Activated T-helper 2 cell treated with anti-CD3 and anti-CD28 coated beads, Interferon-gamma antibody, Interleukin-2, Interleukin-4, amounts not matched to agents 10 μg/mL and 5 μg/mL and 100 μg/mL, durations not matched to agents 14 hours and 24 hours and 36 hours (primary cell): ENCODE measurements at regions of chr1 and their contacts with region 1.

Region 1: DNA sequence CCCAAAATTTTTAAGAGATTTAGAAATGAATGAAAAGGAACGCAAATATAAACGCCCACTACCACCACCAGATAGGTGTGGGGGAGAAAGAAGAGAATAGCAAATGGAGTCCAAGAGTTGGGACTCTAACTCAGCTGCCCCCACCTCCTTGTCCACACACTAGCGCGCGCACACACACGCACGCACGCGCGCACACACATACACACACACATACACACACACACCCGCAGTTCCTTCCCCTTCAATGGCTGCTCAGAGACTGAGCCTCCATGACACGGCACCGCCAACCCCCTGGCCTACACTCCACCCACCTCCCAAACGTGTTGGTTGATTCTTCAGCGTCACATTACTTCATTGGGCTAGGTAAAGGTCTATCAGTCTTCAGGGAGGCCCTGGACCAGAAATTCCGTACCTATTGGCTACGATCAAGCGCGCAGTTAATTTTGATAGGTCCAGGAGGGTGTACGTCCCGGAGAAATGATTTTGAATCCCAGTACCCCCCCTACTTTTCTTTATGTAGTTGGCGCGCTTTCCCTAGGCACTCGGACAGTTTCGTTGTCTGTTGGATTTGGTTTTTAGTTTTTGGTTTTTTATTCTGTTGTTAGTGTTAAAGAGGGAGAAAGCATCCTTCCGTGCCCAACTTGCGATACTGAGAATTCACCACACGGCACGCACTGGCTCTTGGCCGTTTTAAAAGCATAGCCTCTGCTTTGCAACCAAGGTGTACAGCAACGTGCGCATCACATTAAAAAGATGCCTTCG is at the start of gene ANP32E:
- DNase-seq: peak; percentile 95
- H3K4me3 Mint-ChIP-seq: no peak within 1 kb of the TSS
- H3K27ac Mint-ChIP-seq: peak within 1 kb of the TSS; percentile 97
- H3K4me1 Mint-ChIP-seq: peaks cover 18% of the 10 kb centered on the region
- H3K27me3 Mint-ChIP-seq: peaks cover 1% of the 10 kb centered on the region
- total RNA-seq, gene ANP32E: 195 and 198 TPM in 2 replicates

Region 2: DNA sequence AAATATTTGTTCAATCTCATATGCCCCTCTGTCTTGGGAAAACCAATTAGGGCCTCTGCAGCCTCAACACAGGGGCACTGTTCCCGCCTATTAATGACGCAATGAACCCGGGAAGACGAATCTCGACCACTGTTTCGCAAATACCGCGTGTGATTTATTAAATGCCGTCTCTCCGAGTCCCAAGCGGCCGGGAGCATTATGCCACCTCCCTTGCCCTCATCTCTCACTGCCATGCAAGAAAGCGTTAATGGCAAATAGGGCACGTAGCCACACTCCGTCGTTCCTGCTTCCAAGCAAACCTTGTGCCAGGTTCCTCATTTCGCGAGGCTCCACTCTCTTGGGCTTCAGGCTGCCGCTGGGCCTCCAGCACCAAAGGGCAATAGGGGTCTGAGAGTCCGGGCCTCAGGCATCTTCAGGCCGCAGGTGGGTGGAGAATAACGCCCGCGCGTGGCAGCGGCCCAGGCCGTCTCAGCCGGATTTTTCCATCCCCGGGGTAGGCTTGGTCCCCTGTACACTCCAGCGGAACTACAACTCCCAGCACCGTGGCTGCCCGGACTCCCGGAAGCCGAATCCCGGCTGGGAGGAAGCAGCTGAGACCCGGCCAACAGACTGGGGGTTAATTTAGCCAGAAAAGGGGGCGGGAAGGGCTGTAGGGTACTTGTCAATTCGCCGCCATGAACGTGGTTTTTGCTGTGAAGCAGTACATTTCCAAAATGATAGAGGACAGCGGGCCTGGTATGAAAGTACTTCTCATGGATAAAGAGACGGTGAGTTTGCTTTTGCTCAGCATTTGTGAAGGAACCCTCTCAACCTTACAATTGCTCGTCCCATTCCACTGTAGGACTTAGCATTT is 168.6 kb before region 1 on chr1 and contains the start of gene VPS45:
- intact Hi-C with region 1: loop called (anchors 2 kb)
- DNase-seq: peak; percentile 80
- H3K4me3 Mint-ChIP-seq: peak within 1 kb of the TSS; percentile 94
- H3K27ac Mint-ChIP-seq: peak within 1 kb of the TSS; percentile 97
- H3K4me1 Mint-ChIP-seq: peaks cover 31% of the 10 kb centered on the region
- H3K27me3 Mint-ChIP-seq: peaks cover 1% of the 10 kb centered on the region
- total RNA-seq, gene VPS45: 21.9 TPM in 2 replicates

Region 3: GRCh38 chr1:150268705-150269403 is 32.8 kb after region 1 on chr1 and contains the start of gene APH1A:
- intact Hi-C with region 1: loop called (anchors 2 kb)
- DNase-seq: peak; percentile 92
- H3K4me3 Mint-ChIP-seq: peak within 1 kb of the TSS; percentile 91
- H3K27ac Mint-ChIP-seq: peak within 1 kb of the TSS; percentile 80
- H3K4me1 Mint-ChIP-seq: peaks cover 17% of the 10 kb centered on the region
- H3K27me3 Mint-ChIP-seq: no peaks in the 10 kb centered on the region
- total RNA-seq, gene APH1A: 103 and 105 TPM in 2 replicates

Region 4: GRCh38 chr1:150321826-150322166 is 85.8 kb after region 1 on chr1:
- intact Hi-C with region 1: loop called (anchors 1 kb)
- DNase-seq: no peak
- H3K4me3 Mint-ChIP-seq: peak overlapping the region; percentile 100
- H3K27ac Mint-ChIP-seq: peak overlapping the region; percentile 99
- H3K4me1 Mint-ChIP-seq: peaks cover 18% of the 10 kb centered on the region
- H3K27me3 Mint-ChIP-seq: no peaks in the 10 kb centered on the region

Region 5: GRCh38 chr1:150552093-150552691 is 316.2 kb after region 1 on chr1:
- intact Hi-C with region 1: no loop called
- DNase-seq: no peak
- H3K4me3 Mint-ChIP-seq: no peak overlapping the region
- H3K27ac Mint-ChIP-seq: no peak overlapping the region
- H3K4me1 Mint-ChIP-seq: peaks cover 29% of the 10 kb centered on the region
- H3K27me3 Mint-ChIP-seq: peaks cover 13% of the 10 kb centered on the region

Region 6: DNA sequence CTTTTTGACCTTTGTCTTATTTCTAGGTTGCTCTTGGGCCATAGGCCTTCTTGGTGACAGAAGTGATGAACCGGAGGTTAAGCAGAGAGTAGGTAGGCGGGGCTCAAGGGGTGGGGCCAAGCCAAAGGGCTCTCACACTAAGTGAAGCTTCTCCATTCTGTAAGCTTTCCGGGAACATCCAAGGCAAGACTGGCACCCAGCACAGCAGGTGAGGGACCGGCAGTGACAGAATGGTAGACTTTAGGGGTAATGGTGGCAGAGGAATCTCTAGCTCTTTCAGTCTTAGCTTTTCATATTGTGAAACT is 920.4 kb after region 1 on chr1 and contains the start of gene TNFAIP8L2:
- intact Hi-C with region 1: loop called (anchors 10 kb)
- DNase-seq: peak; percentile 71
- H3K4me3 Mint-ChIP-seq: peak within 1 kb of the TSS; percentile 99
- H3K27ac Mint-ChIP-seq: peak within 1 kb of the TSS; percentile 99
- H3K4me1 Mint-ChIP-seq: peaks cover 37% of the 10 kb centered on the region
- H3K27me3 Mint-ChIP-seq: no peaks in the 10 kb centered on the region
- total RNA-seq, gene TNFAIP8L2: 24.3 and 28.7 TPM in 2 replicates

Region 7: DNA sequence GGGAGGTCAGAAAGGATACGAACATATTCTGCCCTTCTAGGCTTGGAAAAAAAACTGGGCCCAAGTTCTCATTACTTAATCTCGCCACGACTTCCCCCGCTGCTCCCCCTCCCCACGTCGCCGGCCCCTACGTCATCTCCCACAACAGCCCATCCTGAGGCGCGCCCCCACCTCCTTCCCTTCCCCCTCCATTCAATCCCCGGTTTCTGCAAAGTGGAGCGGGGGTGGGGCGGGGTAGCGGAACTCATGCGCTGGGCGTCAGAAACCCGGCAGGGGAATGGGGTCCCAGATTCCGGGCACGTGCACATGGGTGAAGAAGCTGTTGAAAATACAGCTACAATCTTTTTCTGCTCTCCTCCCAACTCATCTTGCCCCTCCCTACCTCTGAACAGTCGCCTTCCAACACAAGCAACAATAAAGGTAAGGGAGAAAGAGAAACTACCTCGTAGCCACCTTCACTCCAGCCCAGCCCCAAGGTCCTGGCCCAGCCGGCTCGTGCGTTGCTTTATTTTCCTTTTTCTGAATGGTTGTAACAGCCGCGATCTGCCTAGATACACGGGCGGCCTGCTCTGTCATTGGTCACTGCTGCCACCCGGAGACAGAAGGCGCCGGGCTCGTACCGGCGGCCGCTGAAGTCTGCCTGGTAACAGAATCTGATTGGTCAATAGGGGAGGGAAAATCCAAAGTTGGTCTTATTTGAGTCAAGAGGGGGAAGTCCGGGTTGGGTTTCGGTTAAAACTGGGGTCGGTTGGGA is 1110.9 kb after region 1 on chr1 and contains the start of gene RFX5:
- intact Hi-C with region 1: no loop called
- DNase-seq: peak; percentile 95
- H3K4me3 Mint-ChIP-seq: peak within 1 kb of the TSS; percentile 94
- H3K27ac Mint-ChIP-seq: peak within 1 kb of the TSS; percentile 99
- H3K4me1 Mint-ChIP-seq: peaks cover 29% of the 10 kb centered on the region
- H3K27me3 Mint-ChIP-seq: no peaks in the 10 kb centered on the region
- total RNA-seq, gene RFX5: 68.9 and 85.5 TPM in 2 replicates